Esophagus muscularis mucosa (tissue), 4 donors: ENCODE measurements at regions of chr5 and their contacts with region 1.

Region 1: GRCh38 chr5:134527146-134527960 is 1.9 kb downstream of the JADE2 start:
- DNase-seq: peak; percentile 95
- H3K4me3 ChIP-seq: peak overlapping the region; percentile 79 to 97 (median 92)
- H3K27ac ChIP-seq: peak overlapping the region; percentile 96 to 100 (median 99)
- H3K4me1 ChIP-seq: peaks cover 45 to 69% (median 60%) of the 10 kb centered on the region in 4 donors
- H3K27me3 ChIP-seq: no peaks in the 10 kb centered on the region
- CTCF ChIP-seq: peak in 2 of 3 experiments; percentile 90 to 91
- EP300 ChIP-seq: no peak
- POLR2A ChIP-seq: peak; percentile 58

Region 2: GRCh38 chr5:134370871-134371833 is 156.2 kb before region 1 on chr5 and contains the start of gene UBE2B:
- intact Hi-C with region 1: loop called (anchors 1 kb)
- DNase-seq: peak; percentile 100
- H3K4me3 ChIP-seq: peak within 1 kb of the TSS; percentile 82 to 99 (median 98)
- H3K27ac ChIP-seq: peak within 1 kb of the TSS; percentile 98 to 99 (median 98)
- H3K4me1 ChIP-seq: peaks cover 7 to 59% (median 55%) of the 10 kb centered on the region in 4 donors
- H3K27me3 ChIP-seq: no peaks in the 10 kb centered on the region
- CTCF ChIP-seq: peak in 1 of 3 experiments; percentile 7
- EP300 ChIP-seq: peak; percentile 0
- POLR2A ChIP-seq: peak; percentile 48
- total RNA-seq, gene UBE2B: 38.2 to 96.3 (median 52.3) TPM

Region 3: DNA sequence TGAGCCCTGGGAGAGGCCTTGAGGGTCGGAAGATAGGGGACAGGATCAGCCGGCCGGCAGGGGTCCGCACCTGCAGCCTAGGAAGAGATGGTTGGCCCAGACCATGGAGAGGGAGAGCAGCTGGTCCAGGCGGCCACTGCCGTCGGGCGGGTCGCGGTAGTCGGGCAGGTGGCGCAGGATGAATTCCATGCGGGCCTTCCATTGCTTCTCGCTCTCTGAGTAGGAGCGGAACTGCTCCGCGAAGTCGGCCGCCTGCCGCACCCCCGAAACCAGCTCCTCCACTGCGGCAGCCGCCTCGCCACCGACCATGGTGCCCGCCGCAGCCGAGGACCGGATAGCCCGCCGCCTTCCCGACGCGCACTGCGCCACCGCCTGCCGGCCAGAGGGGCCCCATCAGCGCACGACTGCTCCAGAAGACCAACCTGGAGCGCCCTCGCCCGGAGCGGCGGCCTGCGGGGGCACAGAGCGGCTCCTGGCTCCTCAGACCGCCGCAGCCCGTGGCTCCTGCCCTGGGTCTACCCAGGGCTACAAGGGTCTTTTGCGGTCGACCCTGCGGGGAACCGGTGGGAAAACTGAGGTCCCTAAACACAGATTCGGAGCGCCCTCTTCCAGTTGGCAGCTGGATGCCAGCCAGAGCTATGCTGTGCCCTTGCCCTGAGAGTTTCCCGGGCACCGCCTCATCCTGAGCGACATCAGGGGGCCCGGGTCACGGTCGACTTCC is 115.6 kb before region 1 on chr5 and contains the start of gene CDKN2AIPNL:
- intact Hi-C with region 1: loop called (anchors 5 kb)
- DNase-seq: peak; percentile 96
- H3K4me3 ChIP-seq: peak within 1 kb of the TSS; percentile 71 to 84 (median 82)
- H3K27ac ChIP-seq: peak within 1 kb of the TSS; percentile 82 to 87 (median 85)
- H3K4me1 ChIP-seq: peaks cover 22 to 43% (median 38%) of the 10 kb centered on the region in 4 donors
- H3K27me3 ChIP-seq: no peaks in the 10 kb centered on the region
- CTCF ChIP-seq: peak; percentile 85 to 87 (median 87)
- EP300 ChIP-seq: no peak
- POLR2A ChIP-seq: peak; percentile 40
- total RNA-seq, gene CDKN2AIPNL: 17.9 to 19.9 (median 18.8) TPM

Region 4: GRCh38 chr5:134465816-134466240 is 61.5 kb before region 1 on chr5:
- intact Hi-C with region 1: loop called (anchors 1 kb)
- DNase-seq: peak; percentile 95
- H3K4me3 ChIP-seq: peak overlapping the region; percentile 56 to 62 (median 60)
- H3K27ac ChIP-seq: peak overlapping the region; percentile 94 to 96 (median 95)
- H3K4me1 ChIP-seq: peaks cover 31 to 44% (median 42%) of the 10 kb centered on the region in 4 donors
- H3K27me3 ChIP-seq: no peaks in the 10 kb centered on the region
- CTCF ChIP-seq: no peak
- EP300 ChIP-seq: no peak
- POLR2A ChIP-seq: peak; percentile 50

Region 5: DNA sequence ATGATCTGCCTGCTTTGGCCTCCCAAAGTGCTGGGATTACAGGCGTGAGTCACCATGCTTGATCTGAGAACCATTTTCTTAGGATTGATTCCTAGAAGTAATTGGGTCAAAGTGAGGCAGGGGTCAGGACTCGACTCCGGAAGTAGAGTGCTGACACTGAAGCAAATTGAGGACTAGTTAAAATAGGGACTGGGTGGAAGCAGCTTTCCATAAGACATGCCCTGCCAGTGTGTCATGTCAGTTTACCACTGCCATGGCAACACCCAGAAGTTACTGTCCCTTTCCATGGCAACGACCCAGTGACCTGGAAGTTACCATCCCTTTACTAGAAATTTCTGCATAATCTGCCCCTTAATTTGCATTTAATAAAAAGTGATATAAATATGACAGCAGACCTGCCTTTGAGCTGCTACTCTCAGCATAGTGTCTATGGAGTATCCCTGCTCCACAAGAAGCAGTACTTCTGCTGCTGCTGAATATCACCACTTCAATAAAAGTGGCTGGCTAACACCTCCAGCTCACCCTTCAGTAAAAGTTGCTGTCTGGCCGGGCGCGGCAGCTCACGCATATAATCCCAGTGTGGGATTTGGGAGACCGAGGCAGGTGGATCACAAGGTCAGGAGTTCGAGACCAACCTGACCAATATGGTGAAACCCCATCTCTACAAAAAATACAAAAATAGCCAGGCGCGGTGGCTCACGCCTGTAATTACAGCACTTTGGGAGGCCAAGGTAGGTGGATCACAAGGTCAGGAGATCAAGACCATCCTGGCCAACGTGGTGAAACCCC is 49.7 kb before region 1 on chr5:
- intact Hi-C with region 1: no loop called
- DNase-seq: no peak
- H3K4me3 ChIP-seq: no peak overlapping the region
- H3K27ac ChIP-seq: no peak overlapping the region
- H3K4me1 ChIP-seq: peaks cover 0 to 6% (median 0%) of the 10 kb centered on the region in 4 donors
- H3K27me3 ChIP-seq: no peaks in the 10 kb centered on the region
- CTCF ChIP-seq: no peak
- EP300 ChIP-seq: no peak
- POLR2A ChIP-seq: no peak

Region 6: DNA sequence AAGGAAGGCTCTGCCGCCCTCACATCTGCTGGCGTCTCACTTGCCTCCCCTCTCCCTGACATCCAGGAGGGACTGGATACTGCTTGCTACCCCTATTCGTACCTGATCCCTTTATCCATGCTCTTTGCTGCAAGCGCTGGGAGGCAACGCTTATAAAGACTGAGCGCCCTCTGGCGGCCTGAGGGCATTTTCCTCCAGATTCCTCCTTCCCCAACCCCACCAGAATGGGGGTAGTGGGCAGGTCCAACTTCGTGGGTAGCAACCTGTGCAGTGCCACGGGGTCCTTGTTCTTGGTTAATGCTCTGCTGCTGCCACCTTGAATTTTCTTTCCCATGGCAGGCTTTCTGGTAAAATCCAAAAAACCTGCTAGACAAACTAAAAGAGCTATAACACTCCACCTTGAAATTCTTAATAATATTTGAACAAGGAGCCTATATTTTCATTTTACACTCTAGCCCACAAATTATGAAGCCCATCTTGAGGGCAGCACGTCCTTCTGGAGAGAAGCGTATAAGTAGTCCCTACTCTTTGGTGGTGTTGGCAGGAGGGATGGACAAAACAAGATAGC is 50.5 kb after region 1 on chr5:
- intact Hi-C with region 1: loop called (anchors 2 kb)
- DNase-seq: peak; percentile 95
- H3K4me3 ChIP-seq: no peak overlapping the region
- H3K27ac ChIP-seq: peak overlapping the region in 1 of 4 donors; percentile 32
- H3K4me1 ChIP-seq: peaks cover 48 to 83% (median 69%) of the 10 kb centered on the region in 4 donors
- H3K27me3 ChIP-seq: no peaks in the 10 kb centered on the region
- CTCF ChIP-seq: peak; percentile 77 to 86 (median 79)
- EP300 ChIP-seq: no peak
- POLR2A ChIP-seq: no peak